ENCODE measurements at regions of chr4 and their contacts with region 1.

Region 1: GRCh38 chr4:7719354-7720174 is 220.1 kb downstream of the AFAP1 start:
- DNase-seq: no peak
- H3K4me3 ChIP-seq: no peak overlapping the region
- H3K27ac ChIP-seq: no peak overlapping the region
- H3K4me1 ChIP-seq: peaks cover 0 to 7% (median 4%) of the 10 kb centered on the region in 6 donors
- H3K27me3 ChIP-seq: peaks cover 0 to 71% (median 13%) of the 10 kb centered on the region in 7 donors
- CTCF ChIP-seq: peak; percentile 21 to 91 (median 73)
- POLR2A ChIP-seq: no peak

Region 2: DNA sequence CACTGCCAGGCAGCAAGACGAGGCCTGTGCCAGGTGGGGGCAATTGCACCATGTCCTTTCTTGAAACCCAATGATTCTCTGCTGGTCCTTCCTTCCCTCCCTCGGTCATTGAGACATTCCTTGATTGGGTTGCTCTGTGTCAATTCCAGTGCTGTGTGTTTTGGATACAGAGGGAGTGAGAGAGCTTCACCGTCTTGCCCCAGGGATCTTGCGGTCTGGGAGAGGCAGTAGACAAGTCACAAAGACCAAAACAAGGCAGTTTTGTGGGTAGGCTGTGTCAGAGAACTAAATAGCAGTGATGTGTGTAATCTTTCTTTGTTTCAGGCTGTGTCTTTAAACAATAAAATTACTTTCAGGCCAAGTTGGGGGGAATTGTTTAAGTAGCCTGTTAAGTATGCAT is 715.2 kb before region 1 on chr4:
- intact Hi-C with region 1: no loop called
- DNase-seq: no peak
- H3K4me3 ChIP-seq: no peak overlapping the region
- H3K27ac ChIP-seq: no peak overlapping the region
- H3K4me1 ChIP-seq: peaks cover 0 to 20% (median under 1%) of the 10 kb centered on the region in 6 donors
- H3K27me3 ChIP-seq: no peaks in the 10 kb centered on the region
- CTCF ChIP-seq: no peak
- POLR2A ChIP-seq: no peak

Region 3: DNA sequence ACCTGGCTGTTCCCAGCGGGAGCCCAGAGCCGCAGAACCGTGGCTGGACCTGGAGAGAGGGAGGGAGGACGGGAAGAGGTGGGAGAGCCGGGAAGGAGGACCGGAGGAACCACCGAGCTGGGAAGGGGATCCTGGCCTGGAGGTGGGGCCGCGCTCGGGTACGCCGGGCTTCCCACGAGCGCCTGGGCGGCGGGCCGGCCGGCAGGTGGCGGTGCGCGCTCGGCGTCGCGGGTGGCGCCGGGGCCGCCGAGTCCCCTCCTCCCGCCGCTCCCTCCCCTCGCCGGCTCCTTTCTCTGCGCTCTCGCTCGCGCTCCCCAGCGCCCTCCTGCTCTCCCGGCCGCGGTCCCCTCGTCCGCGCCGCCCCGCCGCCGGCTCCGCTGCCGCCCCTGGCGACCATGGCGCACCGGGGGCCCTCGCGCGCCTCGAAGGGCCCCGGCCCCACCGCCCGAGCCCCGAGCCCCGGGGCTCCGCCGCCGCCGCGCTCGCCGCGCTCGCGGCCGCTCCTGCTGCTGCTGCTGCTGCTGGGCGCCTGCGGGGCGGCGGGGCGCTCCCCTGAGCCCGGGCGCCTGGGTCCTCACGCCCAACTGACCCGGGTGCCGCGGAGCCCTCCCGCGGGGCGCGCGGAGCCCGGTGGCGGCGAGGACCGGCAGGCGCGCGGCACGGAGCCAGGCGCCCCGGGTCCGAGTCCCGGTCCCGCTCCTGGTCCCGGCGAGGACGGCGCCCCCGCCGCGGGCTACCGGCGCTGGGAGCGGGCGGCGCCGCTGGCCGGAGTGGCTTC is 527.1 kb before region 1 on chr4 and contains the start of gene SORCS2:
- intact Hi-C with region 1: loop called (anchors 5 kb)
- DNase-seq: peak; percentile 81
- H3K4me3 ChIP-seq: peak within 1 kb of the TSS in 2 of 8 donors; percentile 16 to 61
- H3K27ac ChIP-seq: no peak within 1 kb of the TSS
- H3K4me1 ChIP-seq: peaks cover 5 to 21% (median 13%) of the 10 kb centered on the region in 6 donors
- H3K27me3 ChIP-seq: peaks cover 0 to 100% (median 44%) of the 10 kb centered on the region in 7 donors
- CTCF ChIP-seq: peak in 9 of 11 experiments; percentile 23 to 78 (median 70)
- POLR2A ChIP-seq: no peak
- total RNA-seq, gene SORCS2: 0.33 to 1.6 (median 0.61) TPM

Region 4: GRCh38 chr4:7581477-7581876 is 138.1 kb before region 1 on chr4:
- intact Hi-C with region 1: no loop called
- DNase-seq: no peak
- H3K4me3 ChIP-seq: no peak overlapping the region
- H3K27ac ChIP-seq: no peak overlapping the region
- H3K4me1 ChIP-seq: no peaks in the 10 kb centered on the region
- H3K27me3 ChIP-seq: peaks cover 0 to 6% (median 0%) of the 10 kb centered on the region in 7 donors
- CTCF ChIP-seq: no peak
- POLR2A ChIP-seq: no peak

Region 5: DNA sequence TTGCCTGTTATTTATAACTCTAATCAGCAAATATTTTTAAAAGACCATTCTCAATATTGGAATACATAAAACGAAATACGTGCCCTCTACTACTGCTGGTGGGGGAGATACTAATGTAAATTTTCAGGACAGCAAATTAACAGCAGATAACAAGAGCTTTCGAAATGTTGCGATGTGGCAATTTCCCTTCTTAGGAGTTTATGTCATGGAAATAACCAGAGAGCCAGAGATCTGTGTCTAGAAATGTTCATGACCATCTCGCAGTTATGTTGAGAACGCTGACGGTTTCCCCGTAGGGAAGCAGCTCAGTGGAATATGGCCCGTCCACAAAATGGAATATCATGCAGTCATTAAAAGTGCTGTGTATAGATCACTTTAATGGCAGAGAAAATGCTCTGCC is 46.4 kb before region 1 on chr4:
- intact Hi-C with region 1: no loop called
- DNase-seq: no peak
- H3K4me3 ChIP-seq: no peak overlapping the region
- H3K27ac ChIP-seq: no peak overlapping the region
- H3K4me1 ChIP-seq: no peaks in the 10 kb centered on the region
- H3K27me3 ChIP-seq: peaks cover 0 to 38% (median 0%) of the 10 kb centered on the region in 7 donors
- CTCF ChIP-seq: no peak
- POLR2A ChIP-seq: no peak

Measured in spleen (tissue), 13 donors.